BJ (cell line): ENCODE measurements at regions of chr16 and their contacts with region 1.

Region 1: GRCh38 chr16:57757326-57757786 is 21.8 kb downstream of the KATNB1 start:
- DNase-seq: no peak
- H3K4me3 ChIP-seq: no peak overlapping the region
- H3K27me3 ChIP-seq: no peaks in the 10 kb centered on the region
- CTCF ChIP-seq: peak; percentile 99

Region 2: DNA sequence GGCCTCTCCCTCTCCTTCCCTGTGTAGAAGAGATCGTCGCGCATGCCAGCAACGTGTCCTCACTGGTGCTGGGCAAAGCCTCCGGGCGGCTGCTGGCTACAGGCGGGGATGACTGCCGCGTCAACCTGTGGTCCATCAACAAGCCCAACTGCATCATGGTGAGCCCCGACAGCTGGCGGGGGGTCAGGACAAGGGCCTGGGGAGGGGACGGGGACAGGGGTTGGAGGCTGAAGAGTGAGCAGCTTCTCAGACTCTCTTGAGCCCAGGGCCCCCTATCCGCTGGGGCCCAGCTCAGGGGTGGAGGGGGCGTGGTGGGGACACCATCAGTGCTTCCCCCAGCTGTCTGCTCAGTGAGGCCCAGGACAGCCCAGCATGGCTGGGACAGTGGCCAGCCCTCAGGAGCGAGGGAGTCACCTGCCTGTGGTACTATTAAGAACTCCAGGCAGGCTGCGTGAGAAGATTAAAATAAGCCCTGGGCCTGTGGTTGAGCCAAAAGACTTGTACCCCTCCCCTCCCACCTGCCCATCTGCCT is 15.6 kb before region 1 on chr16:
- CTCF ChIA-PET with region 1: interaction called, 22 read pairs
- POLR2A ChIA-PET with region 1: no interaction called
- DNase-seq: no peak
- H3K4me3 ChIP-seq: no peak overlapping the region
- H3K27me3 ChIP-seq: no peaks in the 10 kb centered on the region
- CTCF ChIP-seq: no peak

Region 3: DNA sequence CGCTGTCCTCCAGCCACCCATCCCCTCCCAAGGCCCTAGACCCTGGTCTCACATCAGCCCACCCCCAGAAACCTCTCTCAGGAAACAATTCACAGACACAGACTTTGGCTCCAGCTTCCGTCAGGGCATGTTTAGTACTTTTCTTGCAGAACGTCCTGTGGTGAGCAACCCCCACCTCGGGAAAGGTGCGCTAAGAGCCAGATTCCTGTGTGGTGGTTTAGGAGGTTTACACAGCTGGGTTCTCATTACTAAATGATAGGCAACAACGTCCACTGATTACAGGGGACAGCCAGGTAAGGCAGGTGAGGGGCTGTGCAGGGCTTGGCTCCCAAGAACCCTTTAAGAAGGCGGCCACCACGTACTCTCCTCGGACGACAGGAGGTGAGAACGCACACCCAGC is 15.7 kb after region 1 on chr16:
- CTCF ChIA-PET with region 1: interaction called, 19 read pairs
- POLR2A ChIA-PET with region 1: no interaction called
- DNase-seq: no peak
- H3K4me3 ChIP-seq: no peak overlapping the region
- H3K27me3 ChIP-seq: no peaks in the 10 kb centered on the region
- CTCF ChIP-seq: no peak

Region 4: GRCh38 chr16:57899771-57900661 is 142.7 kb after region 1 on chr16:
- CTCF ChIA-PET with region 1: interaction called, 10 read pairs
- POLR2A ChIA-PET with region 1: no interaction called
- DNase-seq: no peak
- H3K4me3 ChIP-seq: no peak overlapping the region
- H3K27me3 ChIP-seq: peaks cover 2% of the 10 kb centered on the region; the same call in 1 of the 2 replicates
- CTCF ChIP-seq: peak; percentile 90

Region 5: GRCh38 chr16:58063377-58064076 is 306.2 kb after region 1 on chr16:
- CTCF ChIA-PET with region 1: no interaction called
- POLR2A ChIA-PET with region 1: no interaction called
- DNase-seq: no peak
- H3K4me3 ChIP-seq: no peak overlapping the region
- H3K27me3 ChIP-seq: no peaks in the 10 kb centered on the region
- CTCF ChIP-seq: no peak